Naive thymus-derived CD4-positive, alpha-beta T cell (primary cell): ENCODE measurements at regions of chr16 and their contacts with region 1.

Region 1: GRCh38 chr16:11255737-11256660 is at the start of gene SOCS1:
- DNase-seq: peak; percentile 76 to 97 (median 87)
- ATAC-seq: peak; percentile 82
- H3K4me3 ChIP-seq: peak within 1 kb of the TSS; percentile 85
- H3K4me3 Mint-ChIP-seq: peak within 1 kb of the TSS; percentile 91 to 98 (median 94)
- H3K27ac ChIP-seq: peak within 1 kb of the TSS; percentile 97
- H3K27ac Mint-ChIP-seq: peak within 1 kb of the TSS; percentile 88 to 97 (median 96)
- H3K4me1 ChIP-seq: peaks cover 48 to 52% of the 10 kb centered on the region in 2 donors
- H3K4me1 Mint-ChIP-seq: peaks cover 19 to 64% (median 59%) of the 10 kb centered on the region in 7 donors
- H3K27me3 ChIP-seq: no peaks in the 10 kb centered on the region
- H3K27me3 Mint-ChIP-seq: peaks cover 0 to 4% (median 0%) of the 10 kb centered on the region in 5 donors
- total RNA-seq, gene SOCS1: 12.8 to 191 (median 46.8) TPM

Region 2: DNA sequence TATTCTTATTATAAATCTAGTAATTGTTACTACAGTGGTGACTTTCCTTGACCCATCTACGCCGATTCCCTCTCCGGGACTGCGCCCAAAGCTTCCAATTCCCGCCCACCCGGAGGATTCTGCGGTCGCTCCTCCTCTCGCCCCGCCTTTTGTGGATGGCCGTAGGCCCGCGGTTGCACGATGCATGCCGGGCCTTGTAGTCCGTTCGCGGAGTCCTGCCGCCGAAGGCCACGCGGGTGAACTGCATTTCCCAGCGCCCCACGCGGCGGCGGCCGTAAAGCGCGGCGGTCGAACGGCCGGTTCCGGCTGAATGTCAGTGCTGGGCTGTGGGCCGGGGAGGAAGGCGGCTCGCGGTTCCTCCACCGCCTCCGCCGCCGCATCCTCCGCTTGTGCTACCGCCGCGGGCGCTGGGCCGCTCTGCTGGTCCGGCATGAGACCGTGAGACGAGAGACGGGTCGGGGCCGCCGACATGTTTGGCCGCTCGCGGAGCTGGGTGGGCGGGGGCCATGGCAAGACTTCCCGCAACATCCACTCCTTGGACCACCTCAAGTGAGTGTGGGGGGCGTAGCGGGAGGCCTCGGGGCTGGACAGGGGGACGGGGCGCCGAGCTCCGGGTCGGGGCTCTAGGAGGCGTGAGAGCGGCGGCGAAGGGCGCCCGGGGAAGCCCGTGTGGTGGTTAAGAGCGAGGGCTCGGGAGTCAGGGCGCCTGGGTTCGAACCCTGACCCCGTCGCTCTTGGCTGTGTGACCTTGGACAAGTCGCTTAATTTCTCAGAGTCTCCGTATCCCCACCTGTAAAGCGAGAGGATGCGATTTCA is 311.5 kb before region 1 on chr16 and contains the start of gene CLEC16A:
- CTCF ChIA-PET with region 1: interaction called, 3 read pairs
- POLR2A ChIA-PET with region 1: interaction called, 9 read pairs
- intact Hi-C with region 1: loop called in 1 of 2 experiments (anchors 1 kb)
- DNase-seq: peak; percentile 92 to 97 (median 94)
- ATAC-seq: peak; percentile 86
- H3K4me3 ChIP-seq: peak within 1 kb of the TSS; percentile 82
- H3K4me3 Mint-ChIP-seq: peak within 1 kb of the TSS; percentile 83 to 96 (median 92)
- H3K27ac ChIP-seq: peak within 1 kb of the TSS; percentile 88
- H3K27ac Mint-ChIP-seq: peak within 1 kb of the TSS; percentile 41 to 92 (median 81)
- H3K4me1 ChIP-seq: peaks cover 34 to 53% of the 10 kb centered on the region in 2 donors
- H3K4me1 Mint-ChIP-seq: peaks cover 43 to 85% (median 70%) of the 10 kb centered on the region in 7 donors
- H3K27me3 ChIP-seq: no peaks in the 10 kb centered on the region
- H3K27me3 Mint-ChIP-seq: no peaks in the 10 kb centered on the region
- total RNA-seq, gene CLEC16A: 28.2 to 38.2 (median 34.0) TPM

Region 3: DNA sequence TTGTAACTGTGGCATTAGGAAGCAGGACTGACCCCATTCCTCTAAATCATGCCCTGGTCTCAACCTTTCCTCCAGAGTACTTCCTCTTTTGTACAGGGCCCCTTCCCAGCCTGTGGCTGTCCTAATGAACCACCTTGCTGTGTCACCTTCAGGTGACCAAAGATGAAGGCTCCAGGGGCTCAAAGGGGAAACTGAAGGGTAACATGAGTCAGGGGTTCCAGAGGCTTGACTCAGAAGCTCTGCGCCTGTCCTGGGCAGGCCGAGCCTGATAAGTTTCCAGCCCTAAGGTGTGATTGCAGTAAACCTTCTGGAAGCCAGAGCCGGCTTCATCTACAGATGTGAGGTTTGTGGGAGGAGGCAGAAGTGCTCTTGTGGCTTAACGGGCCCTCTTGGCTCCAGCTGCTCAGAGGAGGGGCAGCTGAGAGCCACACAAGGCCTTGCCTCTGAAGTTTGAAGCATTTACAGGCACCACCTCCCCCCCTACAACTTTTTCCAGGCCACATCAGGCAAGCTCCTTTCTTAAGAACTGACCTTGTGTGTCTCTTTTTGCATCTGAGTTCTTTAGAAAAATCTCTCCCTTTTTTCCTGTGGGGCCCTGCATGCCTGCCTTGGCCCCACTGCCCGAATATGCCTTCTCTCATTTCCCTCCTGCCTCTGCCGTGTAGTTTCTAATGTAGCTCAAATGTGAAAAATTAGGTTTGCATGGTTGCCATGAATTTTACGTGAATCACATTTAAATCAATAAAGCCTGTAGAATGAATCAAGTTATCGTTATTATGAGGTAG is 161.7 kb before region 1 on chr16:
- CTCF ChIA-PET with region 1: no interaction called
- POLR2A ChIA-PET with region 1: interaction called, 3 read pairs
- intact Hi-C with region 1: loop called (anchors 2 kb)
- DNase-seq: peak in 2 of 9 donors; percentile 7 to 68
- ATAC-seq: peak; percentile 53
- H3K4me3 ChIP-seq: no peak overlapping the region
- H3K4me3 Mint-ChIP-seq: peak overlapping the region in 9 of 10 donors; percentile 29 to 71 (median 63)
- H3K27ac ChIP-seq: peak overlapping the region; percentile 55
- H3K27ac Mint-ChIP-seq: peak overlapping the region; percentile 67 to 92 (median 85)
- H3K4me1 ChIP-seq: peaks cover 19 to 33% of the 10 kb centered on the region in 2 donors
- H3K4me1 Mint-ChIP-seq: peaks cover 21 to 70% (median 42%) of the 10 kb centered on the region in 7 donors
- H3K27me3 ChIP-seq: no peaks in the 10 kb centered on the region
- H3K27me3 Mint-ChIP-seq: no peaks in the 10 kb centered on the region

Region 4: GRCh38 chr16:11297492-11298142 is 41.6 kb after region 1 on chr16:
- CTCF ChIA-PET with region 1: interaction called, 31 read pairs
- POLR2A ChIA-PET with region 1: interaction called, 48 read pairs
- intact Hi-C with region 1: loop called (anchors 1 kb)
- DNase-seq: peak; percentile 50 to 70 (median 65)
- ATAC-seq: peak; percentile 95
- H3K4me3 ChIP-seq: peak overlapping the region; percentile 49
- H3K4me3 Mint-ChIP-seq: peak overlapping the region; percentile 76 to 87 (median 80)
- H3K27ac ChIP-seq: no peak overlapping the region
- H3K27ac Mint-ChIP-seq: peak overlapping the region; percentile 63 to 87 (median 77)
- H3K4me1 ChIP-seq: peaks cover 8% of the 10 kb centered on the region in 2 donors
- H3K4me1 Mint-ChIP-seq: peaks cover 9 to 53% (median 25%) of the 10 kb centered on the region in 7 donors
- H3K27me3 ChIP-seq: no peaks in the 10 kb centered on the region
- H3K27me3 Mint-ChIP-seq: peaks cover 0 to 19% (median 0%) of the 10 kb centered on the region in 5 donors

Region 5: GRCh38 chr16:11560701-11561449 is 304.9 kb after region 1 on chr16:
- CTCF ChIA-PET with region 1: no interaction called
- POLR2A ChIA-PET with region 1: no interaction called
- intact Hi-C with region 1: loop called in 1 of 2 experiments (anchors 5 kb)
- DNase-seq: peak; percentile 41 to 92 (median 89)
- ATAC-seq: peak; percentile 92
- H3K4me3 ChIP-seq: peak overlapping the region; percentile 56
- H3K4me3 Mint-ChIP-seq: peak overlapping the region; percentile 79 to 97 (median 84)
- H3K27ac ChIP-seq: peak overlapping the region; percentile 89
- H3K27ac Mint-ChIP-seq: peak overlapping the region; percentile 92 to 99 (median 99)
- H3K4me1 ChIP-seq: peaks cover 70 to 85% of the 10 kb centered on the region in 2 donors
- H3K4me1 Mint-ChIP-seq: peaks cover 43 to 92% (median 78%) of the 10 kb centered on the region in 7 donors
- H3K27me3 ChIP-seq: no peaks in the 10 kb centered on the region
- H3K27me3 Mint-ChIP-seq: peaks cover 0 to 2% (median 0%) of the 10 kb centered on the region in 5 donors

Region 6: GRCh38 chr16:11915644-11916523 is 659.9 kb after region 1 on chr16 and contains the start of gene GSPT1:
- CTCF ChIA-PET with region 1: no interaction called
- POLR2A ChIA-PET with region 1: no interaction called
- intact Hi-C with region 1: loop called in 1 of 2 experiments (anchors 5 kb)
- DNase-seq: peak; percentile 96 to 100 (median 99)
- ATAC-seq: peak; percentile 94
- H3K4me3 ChIP-seq: peak within 1 kb of the TSS; percentile 74
- H3K4me3 Mint-ChIP-seq: peak within 1 kb of the TSS; percentile 85 to 99 (median 96)
- H3K27ac ChIP-seq: peak within 1 kb of the TSS; percentile 87
- H3K27ac Mint-ChIP-seq: peak within 1 kb of the TSS; percentile 87 to 98 (median 95)
- H3K4me1 ChIP-seq: peaks cover 13 to 24% of the 10 kb centered on the region in 2 donors
- H3K4me1 Mint-ChIP-seq: peaks cover 23 to 37% (median 34%) of the 10 kb centered on the region in 7 donors
- H3K27me3 ChIP-seq: no peaks in the 10 kb centered on the region
- H3K27me3 Mint-ChIP-seq: peaks cover 0 to 10% (median 0%) of the 10 kb centered on the region in 5 donors
- total RNA-seq, gene GSPT1: 92.8 to 148 (median 101) TPM

Region 7: DNA sequence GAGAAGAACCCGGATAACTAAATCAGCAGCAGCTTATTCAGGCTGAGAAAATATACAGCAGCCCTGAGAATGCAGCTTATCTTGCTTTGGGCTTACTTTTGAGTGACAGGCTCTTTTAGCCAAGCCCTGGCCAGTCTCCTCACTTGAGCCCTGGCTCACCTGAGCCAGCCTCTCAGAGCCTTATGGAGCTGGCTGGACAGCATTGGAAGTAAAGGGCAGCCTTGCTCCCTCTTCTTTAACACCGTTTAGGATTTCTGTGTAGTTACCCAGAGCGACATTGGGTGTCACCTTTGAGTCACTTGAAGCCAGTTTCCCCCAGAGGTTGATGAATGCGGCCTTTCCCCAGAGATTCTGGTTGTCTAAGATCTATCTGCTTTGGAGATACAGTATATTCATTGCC is 693.5 kb after region 1 on chr16:
- CTCF ChIA-PET with region 1: no interaction called
- POLR2A ChIA-PET with region 1: no interaction called
- intact Hi-C with region 1: no loop called
- DNase-seq: peak in 3 of 9 donors; percentile 25 to 31 (median 25)
- ATAC-seq: peak; percentile 59
- H3K4me3 ChIP-seq: no peak overlapping the region
- H3K4me3 Mint-ChIP-seq: no peak overlapping the region
- H3K27ac ChIP-seq: no peak overlapping the region
- H3K27ac Mint-ChIP-seq: no peak overlapping the region
- H3K4me1 ChIP-seq: no peaks in the 10 kb centered on the region
- H3K4me1 Mint-ChIP-seq: peaks cover 0 to 6% (median 0%) of the 10 kb centered on the region in 7 donors
- H3K27me3 ChIP-seq: no peaks in the 10 kb centered on the region
- H3K27me3 Mint-ChIP-seq: no peaks in the 10 kb centered on the region